GM12878 (cell line): ENCODE measurements at regions of chr1 and their contacts with region 1.

Region 1: GRCh38 chr1:156524481-156524869 is 23.9 kb upstream of the MEF2D start:
- DNase-seq: no peak
- ATAC-seq: peak; percentile 69
- H3K4me3 ChIP-seq: peak overlapping the region; percentile 54; the same call in 1 of the 2 replicates
- H3K27ac ChIP-seq: peak overlapping the region; percentile 76
- H3K4me1 ChIP-seq: peaks cover 24% of the 10 kb centered on the region
- H3K27me3 ChIP-seq: no peaks in the 10 kb centered on the region
- CTCF ChIP-seq: no peak
- EP300 ChIP-seq: no peak
- POLR2A ChIP-seq: no peak
- RAD21 ChIP-seq: no peak

Region 2: DNA sequence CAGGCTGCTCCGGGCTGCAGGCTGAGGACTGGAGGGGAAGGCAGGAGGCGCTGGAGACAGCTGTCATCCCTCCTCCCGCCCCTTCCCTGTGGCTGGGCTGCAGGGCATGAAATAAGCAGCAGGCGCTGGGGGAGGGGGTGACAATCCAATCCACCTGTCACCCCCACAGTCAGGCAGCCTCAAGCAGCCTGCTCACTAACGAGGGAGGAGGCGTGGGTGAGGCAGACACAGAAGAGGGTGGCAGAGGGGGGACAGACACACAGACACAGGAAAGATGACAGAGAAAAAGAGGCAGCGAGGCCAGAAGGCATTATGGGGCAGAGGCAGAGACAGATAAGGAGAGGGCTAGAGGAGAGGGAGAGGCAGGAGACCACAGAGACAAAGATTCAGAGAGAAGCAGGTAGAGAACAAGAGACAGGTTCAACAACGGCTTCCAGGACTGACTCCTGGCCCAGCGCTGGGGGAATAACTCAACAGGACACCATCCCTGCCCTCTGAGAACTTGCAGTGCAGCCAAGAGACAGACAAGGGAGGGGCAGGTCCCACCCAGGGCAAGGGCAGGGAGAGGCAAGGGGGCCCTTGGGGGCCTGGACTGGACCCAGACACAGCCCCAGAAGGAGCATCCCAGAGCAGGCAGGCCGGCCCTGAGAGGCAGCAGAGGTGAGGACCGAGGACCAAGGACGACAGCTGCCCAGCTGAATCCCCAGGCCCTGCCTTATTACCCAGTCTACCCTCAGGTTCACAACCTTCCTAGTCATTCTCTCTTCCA is 35.1 kb before region 1 on chr1:
- CTCF ChIA-PET with region 1: interaction called, 12 read pairs
- POLR2A ChIA-PET with region 1: interaction called, 15 read pairs
- RAD21 ChIA-PET with region 1: interaction called, 17 read pairs
- SMC1A ChIA-PET with region 1: interaction called, 13 read pairs
- in situ Hi-C with region 1: no loop called
- intact Hi-C with region 1: no loop called
- DNase-seq: no peak
- ATAC-seq: peak; percentile 16
- H3K4me3 ChIP-seq: peak overlapping the region; percentile 73
- H3K27ac ChIP-seq: peak overlapping the region; percentile 96
- H3K4me1 ChIP-seq: peaks cover 86% of the 10 kb centered on the region
- H3K27me3 ChIP-seq: no peaks in the 10 kb centered on the region
- CTCF ChIP-seq: peak in 1 of 3 experiments; percentile 33; a peak in 1 of 6 replicates
- EP300 ChIP-seq: peak in 1 of 2 experiments; percentile 42; a peak in 2 of 4 replicates
- POLR2A ChIP-seq: peak; percentile 48
- RAD21 ChIP-seq: no peak; the same call in 1 of the 2 replicates

Region 3: GRCh38 chr1:156500797-156501499 is 23.5 kb before region 1 on chr1:
- CTCF ChIA-PET with region 1: interaction called, 11 read pairs
- POLR2A ChIA-PET with region 1: interaction called, 15 read pairs
- RAD21 ChIA-PET with region 1: interaction called, 11 read pairs
- SMC1A ChIA-PET with region 1: interaction called, 12 read pairs
- in situ Hi-C with region 1: no loop called
- intact Hi-C with region 1: no loop called
- DNase-seq: no peak
- ATAC-seq: peak; percentile 74
- H3K4me3 ChIP-seq: peak overlapping the region; percentile 92
- H3K27ac ChIP-seq: peak overlapping the region; percentile 97
- H3K4me1 ChIP-seq: peaks cover 52% of the 10 kb centered on the region
- H3K27me3 ChIP-seq: no peaks in the 10 kb centered on the region
- CTCF ChIP-seq: peak; percentile 57 to 71 (median 65)
- EP300 ChIP-seq: peak; percentile 4 to 68; a peak in 3 of 4 replicates
- POLR2A ChIP-seq: peak; percentile 88
- RAD21 ChIP-seq: peak; percentile 43

Region 4: GRCh38 chr1:156510709-156511108 is 13.8 kb before region 1 on chr1:
- CTCF ChIA-PET with region 1: interaction called, 9 read pairs
- POLR2A ChIA-PET with region 1: interaction called, 25 read pairs
- RAD21 ChIA-PET with region 1: interaction called, 28 read pairs
- SMC1A ChIA-PET with region 1: interaction called, 29 read pairs
- in situ Hi-C with region 1: no loop called
- intact Hi-C with region 1: no loop called
- DNase-seq: no peak
- ATAC-seq: no peak
- H3K4me3 ChIP-seq: no peak overlapping the region
- H3K27ac ChIP-seq: no peak overlapping the region
- H3K4me1 ChIP-seq: peaks cover 19% of the 10 kb centered on the region
- H3K27me3 ChIP-seq: no peaks in the 10 kb centered on the region
- CTCF ChIP-seq: no peak
- EP300 ChIP-seq: no peak
- POLR2A ChIP-seq: no peak
- RAD21 ChIP-seq: no peak

Region 5: DNA sequence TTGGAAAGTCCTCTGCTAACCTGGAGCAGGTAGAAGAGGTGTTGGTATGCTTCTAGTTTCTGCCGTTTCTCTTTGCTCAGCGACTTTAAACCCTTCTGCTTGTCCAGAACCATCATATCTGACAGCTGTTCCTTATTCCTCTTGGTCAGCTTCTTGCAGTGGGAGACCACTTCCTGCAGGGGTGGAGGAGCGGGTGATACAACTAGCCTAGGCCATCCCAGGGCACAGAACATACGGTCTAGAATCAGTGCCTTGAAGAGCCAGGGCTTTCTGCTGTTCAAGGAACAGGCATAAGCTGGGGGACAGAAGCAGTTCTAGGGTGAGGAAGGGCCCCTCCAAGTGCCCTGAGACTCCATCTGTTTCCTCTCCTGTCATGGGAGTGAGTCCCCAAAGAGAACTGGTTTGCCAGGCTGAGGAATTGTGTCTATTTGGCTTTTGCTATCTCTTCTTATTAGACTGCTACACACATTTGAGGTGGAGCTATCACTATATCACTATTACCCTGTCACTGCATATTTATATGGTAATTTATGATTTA is 15.4 kb after region 1 on chr1:
- CTCF ChIA-PET with region 1: interaction called, 6 read pairs
- POLR2A ChIA-PET with region 1: interaction called, 13 read pairs
- RAD21 ChIA-PET with region 1: interaction called, 5 read pairs
- SMC1A ChIA-PET with region 1: interaction called, 11 read pairs
- in situ Hi-C with region 1: no loop called
- intact Hi-C with region 1: no loop called
- DNase-seq: no peak
- ATAC-seq: no peak
- H3K4me3 ChIP-seq: no peak overlapping the region
- H3K27ac ChIP-seq: no peak overlapping the region
- H3K4me1 ChIP-seq: no peaks in the 10 kb centered on the region
- H3K27me3 ChIP-seq: no peaks in the 10 kb centered on the region
- CTCF ChIP-seq: no peak
- EP300 ChIP-seq: no peak
- POLR2A ChIP-seq: no peak
- RAD21 ChIP-seq: no peak

Region 6: DNA sequence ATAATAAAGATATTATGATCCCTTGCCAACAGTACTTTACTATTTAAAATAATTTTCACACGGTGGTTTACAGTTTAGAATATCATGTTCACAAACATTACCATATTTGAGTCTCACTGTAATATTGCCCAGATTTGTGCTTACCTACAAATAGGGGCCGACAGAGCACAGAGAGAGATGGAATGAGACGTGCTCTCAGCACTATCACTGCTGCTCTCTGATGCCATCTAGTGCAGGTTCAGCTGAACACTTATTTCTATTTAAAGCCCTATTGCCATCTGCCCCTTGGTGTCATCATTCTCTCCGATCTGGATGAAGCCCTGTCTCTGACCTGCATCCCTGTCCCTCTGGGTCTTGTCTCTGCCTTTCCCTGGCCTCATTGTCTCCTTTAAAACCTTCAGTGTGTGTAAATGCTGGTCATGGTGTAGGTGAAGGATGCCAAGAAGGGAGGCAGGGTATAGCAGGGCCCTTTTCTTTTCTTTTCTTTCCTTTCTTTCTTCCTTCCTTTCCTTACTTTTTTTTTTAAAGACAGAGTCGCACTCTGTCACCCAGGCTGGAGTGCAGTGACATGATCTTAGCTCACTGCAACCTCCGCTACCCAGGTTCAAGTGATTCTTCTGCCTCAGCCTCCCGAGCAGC is 83.7 kb after region 1 on chr1:
- CTCF ChIA-PET with region 1: interaction called, 11 read pairs
- POLR2A ChIA-PET with region 1: no interaction called
- RAD21 ChIA-PET with region 1: no interaction called
- SMC1A ChIA-PET with region 1: no interaction called
- in situ Hi-C with region 1: no loop called
- intact Hi-C with region 1: no loop called
- DNase-seq: peak; percentile 62
- ATAC-seq: peak; percentile 99
- H3K4me3 ChIP-seq: no peak overlapping the region
- H3K27ac ChIP-seq: no peak overlapping the region
- H3K4me1 ChIP-seq: 0 out of 2 replicates have a peak, but pooled peaks cover 4% of the 10 kb centered on the region
- H3K27me3 ChIP-seq: peaks cover 0 to 3% of the 10 kb centered on the region in 2 experiments; a peak in 2 of 4 replicates
- CTCF ChIP-seq: peak; percentile 75 to 93 (median 78)
- EP300 ChIP-seq: no peak
- POLR2A ChIP-seq: no peak
- RAD21 ChIP-seq: peak; percentile 80

Region 7: GRCh38 chr1:156659994-156660751 is 135.7 kb after region 1 on chr1:
- CTCF ChIA-PET with region 1: interaction called, 10 read pairs
- POLR2A ChIA-PET with region 1: interaction called, 5 read pairs
- RAD21 ChIA-PET with region 1: no interaction called
- SMC1A ChIA-PET with region 1: no interaction called
- in situ Hi-C with region 1: no loop called
- intact Hi-C with region 1: no loop called
- DNase-seq: peak; percentile 70
- ATAC-seq: peak; percentile 84
- H3K4me3 ChIP-seq: peak overlapping the region; percentile 94
- H3K27ac ChIP-seq: peak overlapping the region; percentile 90
- H3K4me1 ChIP-seq: peaks cover 74% of the 10 kb centered on the region
- H3K27me3 ChIP-seq: 0 out of 4 replicates have a peak, but pooled peaks cover 0 to 2% of the 10 kb centered on the region in 2 experiments
- CTCF ChIP-seq: peak; percentile 99 to 100 (median 100); a peak in 5 of 6 replicates
- EP300 ChIP-seq: no peak
- POLR2A ChIP-seq: peak; percentile 69
- RAD21 ChIP-seq: peak; percentile 81

Region 8: GRCh38 chr1:156987715-156988114 is 463.2 kb after region 1 on chr1:
- CTCF ChIA-PET with region 1: no interaction called
- POLR2A ChIA-PET with region 1: no interaction called
- RAD21 ChIA-PET with region 1: no interaction called
- SMC1A ChIA-PET with region 1: no interaction called
- in situ Hi-C with region 1: no loop called
- intact Hi-C with region 1: no loop called
- DNase-seq: no peak
- ATAC-seq: no peak
- H3K4me3 ChIP-seq: no peak overlapping the region
- H3K27ac ChIP-seq: no peak overlapping the region
- H3K4me1 ChIP-seq: no peaks in the 10 kb centered on the region
- H3K27me3 ChIP-seq: no peaks in the 10 kb centered on the region
- CTCF ChIP-seq: no peak
- EP300 ChIP-seq: no peak
- POLR2A ChIP-seq: no peak
- RAD21 ChIP-seq: no peak